Lower leg skin (tissue), 4 donors: ENCODE measurements at regions of chr1 and their contacts with region 1.

Region 1: DNA sequence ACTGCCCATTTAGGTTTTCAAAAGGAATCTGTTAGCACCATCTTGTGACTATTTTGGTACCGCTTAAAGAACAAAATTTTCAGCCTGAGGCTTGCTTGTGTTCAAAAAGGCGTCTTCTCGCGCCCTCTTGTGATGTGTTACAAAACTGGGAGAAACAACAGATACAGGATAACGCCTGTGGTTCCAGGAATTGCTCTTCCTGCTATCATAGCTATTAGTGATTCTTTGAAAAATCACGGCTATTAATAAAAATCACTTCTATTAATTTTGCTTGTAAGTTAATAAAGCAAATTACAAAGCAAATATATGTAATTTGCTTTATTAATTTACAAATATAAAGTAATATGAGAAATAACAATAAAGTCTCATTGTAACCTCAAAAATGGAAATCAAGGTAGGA is 82.2 kb upstream of the ABCD3 start:
- DNase-seq: peak; percentile 83 to 88
- H3K4me3 ChIP-seq: no peak overlapping the region
- CTCF ChIP-seq: peak in 2 of 3 donors; percentile 12 to 60
- POLR2A ChIP-seq: no peak

Region 2: GRCh38 chr1:94058766-94059165 is 277.2 kb before region 1 on chr1:
- intact Hi-C with region 1: loop called (anchors 2 kb)
- DNase-seq: no peak
- H3K4me3 ChIP-seq: no peak overlapping the region
- CTCF ChIP-seq: no peak
- POLR2A ChIP-seq: no peak

Region 3: GRCh38 chr1:94237291-94238226 is 98.4 kb before region 1 on chr1 and contains the start of gene ARHGAP29:
- intact Hi-C with region 1: loop called (anchors 5 kb)
- DNase-seq: peak; percentile 38 to 94
- H3K4me3 ChIP-seq: peak within 1 kb of the TSS; percentile 74
- CTCF ChIP-seq: no peak
- POLR2A ChIP-seq: peak in 1 of 2 donors; percentile 67
- total RNA-seq, gene ARHGAP29: 30.1 to 49.5 (median 33.9) TPM

Region 4: GRCh38 chr1:94672934-94673333 is 337.0 kb after region 1 on chr1:
- intact Hi-C with region 1: no loop called
- DNase-seq: no peak
- H3K4me3 ChIP-seq: no peak overlapping the region
- CTCF ChIP-seq: no peak
- POLR2A ChIP-seq: no peak

Region 5: GRCh38 chr1:94801919-94802546 is 466.1 kb after region 1 on chr1:
- intact Hi-C with region 1: loop called (anchors 5 kb)
- DNase-seq: peak; percentile 31 to 86
- H3K4me3 ChIP-seq: no peak overlapping the region
- CTCF ChIP-seq: no peak
- POLR2A ChIP-seq: no peak